Dendritic cell treated with granulocyte-macrophage colony-stimulating factor and Interleukin-4, amounts not matched to agents 40 ng/mL and 50 ng/mL, for 4 days (primary cell): ENCODE measurements at regions of chr18 and their contacts with region 1.

Region 1: GRCh38 chr18:36203360-36203895 is 16.1 kb downstream of the MOCOS start:
- H3K4me3 Mint-ChIP-seq: no peak overlapping the region
- H3K27ac Mint-ChIP-seq: no peak overlapping the region
- H3K4me1 Mint-ChIP-seq: no peaks in the 10 kb centered on the region
- H3K27me3 Mint-ChIP-seq: peaks cover 4% of the 10 kb centered on the region

Region 2: DNA sequence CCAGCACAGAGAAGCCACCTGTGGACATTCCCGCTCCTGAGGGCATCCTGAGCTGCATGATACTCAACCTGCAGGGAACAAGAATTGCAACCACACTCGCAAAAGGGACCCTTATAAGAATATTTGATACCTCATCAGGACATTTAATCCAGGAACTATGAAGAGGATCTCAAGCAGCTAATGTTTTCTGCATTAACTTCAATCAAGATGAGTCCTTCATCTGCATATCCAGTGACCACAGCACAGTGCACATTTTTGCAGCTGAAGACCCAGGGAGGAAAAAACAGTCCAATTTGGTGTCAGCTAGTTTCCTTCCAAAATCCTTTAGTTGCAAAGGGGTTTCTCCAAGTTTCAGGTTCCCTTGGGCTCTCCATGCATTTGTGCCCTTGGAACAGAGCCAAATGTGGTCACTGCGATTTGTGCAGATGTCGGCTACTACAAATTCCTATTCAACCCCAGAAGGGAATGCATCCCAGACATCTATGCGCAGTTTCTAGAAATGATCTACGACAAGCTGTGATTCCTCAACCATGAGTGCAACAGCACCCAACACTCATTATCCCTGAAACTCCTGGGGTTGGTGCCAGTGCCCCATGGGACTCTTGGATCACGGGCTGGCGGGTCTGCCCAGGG is 70.8 kb after region 1 on chr18:
- intact Hi-C with region 1: loop called (anchors 10 kb)
- H3K4me3 Mint-ChIP-seq: no peak overlapping the region
- H3K27ac Mint-ChIP-seq: no peak overlapping the region
- H3K4me1 Mint-ChIP-seq: no peaks in the 10 kb centered on the region
- H3K27me3 Mint-ChIP-seq: peaks cover 19% of the 10 kb centered on the region

Region 3: GRCh38 chr18:36309436-36310391 is 106.3 kb after region 1 on chr18:
- intact Hi-C with region 1: no loop called
- H3K4me3 Mint-ChIP-seq: no peak overlapping the region
- H3K27ac Mint-ChIP-seq: no peak overlapping the region
- H3K4me1 Mint-ChIP-seq: no peaks in the 10 kb centered on the region
- H3K27me3 Mint-ChIP-seq: peaks cover 21% of the 10 kb centered on the region